MCF 10A (cell line): ENCODE measurements at regions of chr6 and their contacts with region 1.

Region 1: GRCh38 chr6:152484806-152485205 is 152.4 kb downstream of the SYNE1 start:
- DNase-seq: no peak
- H3K4me3 Mint-ChIP-seq: no peak overlapping the region
- H3K27ac Mint-ChIP-seq: no peak overlapping the region
- H3K4me1 Mint-ChIP-seq: no peaks in the 10 kb centered on the region
- H3K27me3 Mint-ChIP-seq: no peaks in the 10 kb centered on the region
- CTCF ChIP-seq: no peak

Region 2: DNA sequence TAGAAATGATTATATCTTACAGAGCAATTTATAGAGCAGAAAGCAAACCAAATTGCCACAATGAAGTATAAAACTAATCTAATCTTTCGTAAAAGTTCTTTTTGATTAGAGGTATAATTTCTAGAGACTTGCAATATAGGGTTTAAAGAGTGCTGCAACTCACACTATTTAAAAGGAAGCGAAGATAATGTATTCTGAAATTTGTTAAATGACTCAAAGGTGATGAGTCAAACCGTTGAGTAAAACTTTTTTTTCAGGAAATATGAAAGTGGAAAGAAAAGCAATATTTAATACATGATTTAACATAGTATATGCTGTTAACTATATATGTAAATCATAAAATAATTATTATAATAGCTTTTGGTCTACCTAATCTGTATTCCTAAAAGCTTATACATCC is 18.7 kb after region 1 on chr6:
- CTCF ChIA-PET with region 1: interaction called, 11 read pairs
- POLR2A ChIA-PET with region 1: no interaction called
- intact Hi-C with region 1: no loop called
- DNase-seq: peak; percentile 24
- H3K4me3 Mint-ChIP-seq: no peak overlapping the region
- H3K27ac Mint-ChIP-seq: no peak overlapping the region
- H3K4me1 Mint-ChIP-seq: no peaks in the 10 kb centered on the region
- H3K27me3 Mint-ChIP-seq: no peaks in the 10 kb centered on the region
- CTCF ChIP-seq: no peak

Region 3: GRCh38 chr6:152669895-152670294 is 185.1 kb after region 1 on chr6:
- CTCF ChIA-PET with region 1: interaction called, 43 read pairs
- POLR2A ChIA-PET with region 1: no interaction called
- intact Hi-C with region 1: loop called (anchors 2 kb)
- DNase-seq: peak; percentile 42
- H3K4me3 Mint-ChIP-seq: no peak overlapping the region
- H3K27ac Mint-ChIP-seq: no peak overlapping the region
- H3K4me1 Mint-ChIP-seq: no peaks in the 10 kb centered on the region
- H3K27me3 Mint-ChIP-seq: no peaks in the 10 kb centered on the region
- CTCF ChIP-seq: peak; percentile 42